ENCODE measurements at regions of chr16 and their contacts with region 1.

Region 1: DNA sequence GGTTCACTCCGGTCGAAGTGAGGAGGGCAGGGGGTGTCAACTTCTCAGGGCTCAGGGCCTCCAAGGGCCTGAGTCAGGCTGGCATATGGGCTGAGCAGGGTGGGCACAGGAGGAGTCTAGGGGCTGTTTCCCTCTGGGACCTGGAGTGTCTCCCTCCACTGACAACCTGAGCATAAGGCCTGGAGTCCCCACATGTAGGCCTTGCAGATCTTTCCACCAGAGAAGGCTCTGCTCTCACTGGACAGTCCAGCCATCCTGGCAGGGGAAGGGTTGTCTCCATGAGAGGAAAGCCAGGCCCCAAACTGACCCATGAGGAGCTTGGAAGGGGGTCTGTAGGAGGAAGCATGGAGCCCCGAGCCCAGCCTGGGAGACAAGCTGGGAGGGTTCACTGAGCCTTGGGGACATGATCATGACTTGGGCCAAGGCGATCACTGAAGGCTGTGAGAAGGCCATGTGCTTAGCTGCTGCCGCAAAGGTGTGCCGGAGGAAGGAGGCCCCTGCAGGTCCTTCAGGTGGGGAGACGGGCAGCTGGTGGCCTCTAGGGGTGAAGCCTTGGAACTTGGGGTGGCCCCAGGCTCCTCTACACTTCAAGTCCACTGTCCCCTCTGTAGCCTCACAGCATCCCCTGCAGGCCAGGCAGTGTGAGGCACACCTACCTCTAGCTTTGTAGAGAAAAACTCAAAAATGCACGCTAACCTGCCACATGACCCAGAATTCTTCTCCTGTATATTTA is 9.9 kb downstream of the CMTM2 start:
- DNase-seq: peak; percentile 86
- ATAC-seq: peak; percentile 99
- H3K4me3 Mint-ChIP-seq: peak overlapping the region; percentile 63
- H3K27ac Mint-ChIP-seq: peak overlapping the region; percentile 65
- H3K4me1 Mint-ChIP-seq: peaks cover 35% of the 10 kb centered on the region
- H3K27me3 Mint-ChIP-seq: no peaks in the 10 kb centered on the region

Region 2: GRCh38 chr16:66199189-66199588 is 390.0 kb before region 1 on chr16:
- CTCF ChIA-PET with region 1: no interaction called
- POLR2A ChIA-PET with region 1: no interaction called
- intact Hi-C with region 1: no loop called
- DNase-seq: no peak
- ATAC-seq: no peak
- H3K4me3 Mint-ChIP-seq: no peak overlapping the region
- H3K27ac Mint-ChIP-seq: no peak overlapping the region
- H3K4me1 Mint-ChIP-seq: no peaks in the 10 kb centered on the region
- H3K27me3 Mint-ChIP-seq: peaks cover under 1% of the 10 kb centered on the region

Region 3: DNA sequence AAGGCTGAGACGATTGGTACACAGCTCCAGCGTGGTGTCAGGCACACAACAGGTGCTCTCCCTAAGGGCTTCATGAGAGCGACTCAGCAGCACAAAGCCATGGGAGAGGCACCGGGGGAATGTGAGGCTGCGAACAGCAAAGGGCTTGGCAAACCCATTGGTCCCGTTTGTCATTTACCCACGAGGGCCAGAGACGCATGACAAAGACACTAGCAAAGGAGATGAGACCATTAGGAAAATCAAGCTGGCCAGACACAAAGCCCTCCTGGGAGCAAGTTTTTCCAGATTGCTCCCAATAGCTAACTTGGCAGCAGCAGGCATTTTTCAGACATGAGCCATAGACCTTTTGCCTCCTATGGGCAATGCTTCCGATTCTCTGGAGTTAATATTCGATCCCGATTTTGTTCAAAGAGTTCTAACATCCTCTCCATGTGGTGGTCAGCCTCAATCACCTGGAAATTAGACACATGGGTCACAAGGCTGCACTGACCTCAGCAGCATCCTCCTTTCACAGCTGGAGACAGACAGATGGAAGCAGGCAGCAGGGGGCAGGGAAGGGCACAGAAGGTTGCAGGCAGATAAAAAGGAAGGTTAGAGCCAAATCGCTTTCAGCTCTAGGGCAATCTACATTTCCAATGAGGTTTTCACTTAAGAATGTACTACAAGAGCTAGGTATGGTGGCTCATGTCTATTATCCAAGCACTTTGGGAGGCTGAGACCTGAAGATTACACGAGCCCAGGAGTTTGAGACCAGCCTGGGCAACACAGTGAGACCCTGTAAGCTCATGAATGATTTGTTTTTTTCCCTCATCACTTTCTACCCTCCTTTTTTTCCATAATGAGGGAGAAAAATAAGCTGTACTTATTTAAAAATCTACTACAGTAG is 77.3 kb before region 1 on chr16:
- CTCF ChIA-PET with region 1: interaction called, 5 read pairs
- POLR2A ChIA-PET with region 1: no interaction called
- intact Hi-C with region 1: loop called (anchors 1 to 5 kb)
- DNase-seq: no peak
- ATAC-seq: no peak
- H3K4me3 Mint-ChIP-seq: no peak overlapping the region
- H3K27ac Mint-ChIP-seq: no peak overlapping the region
- H3K4me1 Mint-ChIP-seq: peaks cover 18% of the 10 kb centered on the region
- H3K27me3 Mint-ChIP-seq: no peaks in the 10 kb centered on the region

Region 4: GRCh38 chr16:66562407-66562806 is 26.7 kb before region 1 on chr16:
- CTCF ChIA-PET with region 1: interaction called, 20 read pairs
- POLR2A ChIA-PET with region 1: no interaction called
- intact Hi-C with region 1: loop called in 1 of 2 experiments (anchors 2 kb)
- DNase-seq: no peak
- ATAC-seq: no peak
- H3K4me3 Mint-ChIP-seq: no peak overlapping the region
- H3K27ac Mint-ChIP-seq: no peak overlapping the region
- H3K4me1 Mint-ChIP-seq: peaks cover 65% of the 10 kb centered on the region
- H3K27me3 Mint-ChIP-seq: no peaks in the 10 kb centered on the region